MCF 10A (cell line): ENCODE measurements at regions of chrX and their contacts with region 1.

Region 1: DNA sequence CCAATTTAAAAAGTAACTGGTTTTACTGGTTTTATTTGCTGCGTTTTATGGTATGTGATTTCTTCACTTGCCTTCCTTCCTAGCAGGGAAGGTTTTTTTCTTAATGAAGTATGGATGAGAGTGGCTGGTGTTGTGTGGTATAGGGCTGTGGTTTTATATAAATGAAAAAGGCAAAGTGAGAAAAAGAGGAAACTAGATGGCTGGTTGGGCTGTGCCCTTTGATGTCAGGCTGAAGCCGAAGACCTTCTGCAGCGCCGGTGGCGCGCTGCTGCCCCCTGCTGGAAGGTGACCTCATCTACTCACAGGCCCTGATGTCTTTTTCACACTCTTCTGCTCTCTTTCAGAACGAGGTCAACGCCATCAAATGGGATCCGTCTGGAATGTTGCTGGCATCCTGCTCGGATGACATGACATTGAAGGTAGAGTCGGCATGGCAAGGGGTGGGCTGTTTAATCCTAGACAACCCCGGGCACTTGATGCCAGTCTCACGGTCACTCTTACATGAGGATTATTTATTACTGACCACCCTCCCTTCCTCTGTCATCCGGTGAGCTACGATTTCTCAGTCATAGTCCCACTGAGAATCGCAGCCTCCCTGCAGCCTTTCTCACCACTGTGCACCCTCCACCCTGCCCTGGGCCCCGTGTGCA is 56.6 kb downstream of the GPR143 start:
- DNase-seq: peak; percentile 78
- H3K4me3 Mint-ChIP-seq: no peak overlapping the region
- H3K27ac Mint-ChIP-seq: peak overlapping the region; percentile 36
- H3K4me1 Mint-ChIP-seq: no peaks in the 10 kb centered on the region
- H3K27me3 Mint-ChIP-seq: no peaks in the 10 kb centered on the region
- CTCF ChIP-seq: peak; percentile 89

Region 2: GRCh38 chrX:8815464-8816065 is 893.5 kb before region 1 on chrX:
- CTCF ChIA-PET with region 1: interaction called, 22 read pairs
- POLR2A ChIA-PET with region 1: no interaction called
- intact Hi-C with region 1: loop called (anchors 1 kb)
- DNase-seq: peak; percentile 71
- H3K4me3 Mint-ChIP-seq: no peak overlapping the region
- H3K27ac Mint-ChIP-seq: no peak overlapping the region
- H3K4me1 Mint-ChIP-seq: no peaks in the 10 kb centered on the region
- H3K27me3 Mint-ChIP-seq: peaks cover 16% of the 10 kb centered on the region
- CTCF ChIP-seq: peak; percentile 59

Region 3: DNA sequence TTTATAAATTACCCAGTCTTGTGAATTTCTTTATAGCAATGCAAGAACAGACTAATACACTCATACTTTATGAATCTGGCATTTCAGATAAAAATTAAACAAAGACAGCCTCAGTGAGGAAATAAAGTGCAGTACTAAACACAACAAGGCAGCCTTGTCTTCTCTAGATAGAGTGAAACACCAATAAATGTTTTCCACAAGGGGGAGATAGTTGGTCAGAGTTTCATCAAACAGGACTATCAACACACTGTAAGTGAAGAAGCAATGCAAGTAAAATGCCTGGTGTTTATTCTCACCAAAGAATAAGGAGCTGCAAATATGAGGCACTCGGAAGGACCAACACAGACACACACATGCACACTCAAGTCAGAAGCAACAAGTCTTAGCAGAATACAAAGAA is 737.9 kb before region 1 on chrX:
- CTCF ChIA-PET with region 1: interaction called, 4 read pairs
- POLR2A ChIA-PET with region 1: no interaction called
- intact Hi-C with region 1: loop called (anchors 1 kb)
- DNase-seq: peak; percentile 67
- H3K4me3 Mint-ChIP-seq: no peak overlapping the region
- H3K27ac Mint-ChIP-seq: no peak overlapping the region
- H3K4me1 Mint-ChIP-seq: no peaks in the 10 kb centered on the region
- H3K27me3 Mint-ChIP-seq: no peaks in the 10 kb centered on the region
- CTCF ChIP-seq: peak; percentile 31

Region 4: DNA sequence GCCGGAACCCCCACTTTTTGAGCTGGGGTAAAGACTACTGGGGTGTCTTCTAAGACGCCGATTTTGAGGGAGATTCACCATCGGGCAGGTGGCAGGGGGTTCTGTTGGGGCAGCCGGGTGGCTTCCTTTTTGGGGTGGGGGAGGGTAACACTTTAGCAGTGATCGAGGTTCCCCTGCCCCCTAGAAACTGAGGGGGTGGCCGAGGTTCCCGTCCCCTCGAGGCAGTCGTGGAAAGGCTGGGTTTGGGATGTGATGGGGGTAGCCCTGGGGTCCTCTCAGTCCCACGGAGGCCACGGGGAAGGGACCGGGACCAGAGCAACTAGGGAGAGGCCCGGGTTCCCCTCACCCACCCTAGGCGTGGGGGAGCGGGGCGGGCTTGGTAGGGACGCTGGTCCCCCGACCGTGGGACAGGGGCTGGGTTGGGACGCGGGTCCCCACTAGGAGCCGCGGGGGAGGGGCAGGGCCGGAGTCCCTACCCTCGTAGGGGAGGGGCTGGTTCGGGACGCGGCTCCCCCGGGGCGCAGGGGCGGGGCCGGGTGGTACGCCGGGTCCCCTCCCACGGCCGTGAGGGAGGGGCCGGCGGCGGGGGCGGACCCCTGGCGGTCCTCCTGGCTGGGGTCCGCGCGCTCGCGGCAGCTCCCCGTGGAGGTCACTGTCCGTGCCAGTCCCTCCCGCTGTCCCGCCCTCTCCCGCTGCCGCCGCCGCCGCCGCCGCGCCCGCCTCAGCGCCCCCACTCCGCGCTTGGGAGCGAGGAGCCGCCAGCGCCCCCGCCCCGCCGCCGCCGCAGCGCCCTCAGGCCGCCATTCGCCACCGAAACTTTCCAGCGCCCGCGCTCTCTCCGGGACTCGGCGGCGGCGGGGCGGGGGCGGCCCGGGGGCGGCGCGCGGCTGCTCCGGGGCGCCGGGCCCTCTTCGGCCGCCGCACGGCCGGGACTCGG is 244.3 kb before region 1 on chrX and contains the start of gene TBL1X:
- CTCF ChIA-PET with region 1: no interaction called
- POLR2A ChIA-PET with region 1: no interaction called
- intact Hi-C with region 1: loop called (anchors 2 kb)
- DNase-seq: no peak
- H3K4me3 Mint-ChIP-seq: peak within 1 kb of the TSS; percentile 57
- H3K27ac Mint-ChIP-seq: no peak within 1 kb of the TSS
- H3K4me1 Mint-ChIP-seq: peaks cover 14% of the 10 kb centered on the region
- H3K27me3 Mint-ChIP-seq: no peaks in the 10 kb centered on the region
- CTCF ChIP-seq: no peak
- total RNA-seq, gene TBL1X: 15.0 and 21.7 TPM in 2 replicates